PC-3 (cell line): ENCODE measurements at regions of chr12 and their contacts with region 1.

Region 1: DNA sequence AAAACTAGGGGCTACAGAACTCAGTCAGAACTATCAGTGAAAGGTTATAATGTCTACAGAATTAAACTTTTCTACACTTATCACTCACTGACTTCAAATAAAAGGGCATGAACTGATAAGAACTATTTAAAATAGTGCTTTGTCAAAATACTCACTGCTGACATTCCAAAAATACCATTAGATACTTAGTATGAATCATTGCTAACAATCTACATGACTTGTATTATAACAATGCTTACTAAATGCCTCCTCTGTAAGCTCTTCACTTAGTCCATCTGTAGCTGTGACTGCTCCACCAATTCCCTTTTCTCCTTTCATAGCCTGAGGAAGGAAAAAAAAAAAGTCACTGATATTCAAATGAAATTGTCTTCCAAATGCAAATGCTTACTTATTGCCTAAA is 17.0 kb downstream of the NFYB start:
- DNase-seq: peak; percentile 69
- ATAC-seq: peak; percentile 95
- H3K4me3 ChIP-seq: no peak overlapping the region
- H3K27ac ChIP-seq: no peak overlapping the region
- H3K4me1 ChIP-seq: peaks cover 12% of the 10 kb centered on the region
- H3K27me3 ChIP-seq: no peaks in the 10 kb centered on the region
- CTCF ChIP-seq: no peak

Region 2: GRCh38 chr12:104064031-104064822 is 56.8 kb before region 1 on chr12 and contains the start of gene HCFC2:
- CTCF ChIA-PET with region 1: no interaction called
- POLR2A ChIA-PET with region 1: interaction called, 15 read pairs
- intact Hi-C with region 1: no loop called
- DNase-seq: peak; percentile 90
- ATAC-seq: peak; percentile 86
- H3K4me3 ChIP-seq: peak within 1 kb of the TSS; percentile 94
- H3K27ac ChIP-seq: peak within 1 kb of the TSS; percentile 15
- H3K4me1 ChIP-seq: peaks cover 11% of the 10 kb centered on the region
- H3K27me3 ChIP-seq: no peaks in the 10 kb centered on the region
- CTCF ChIP-seq: no peak
- total RNA-seq, gene HCFC2: 7.8 and 10.7 TPM in 2 replicates

Region 3: DNA sequence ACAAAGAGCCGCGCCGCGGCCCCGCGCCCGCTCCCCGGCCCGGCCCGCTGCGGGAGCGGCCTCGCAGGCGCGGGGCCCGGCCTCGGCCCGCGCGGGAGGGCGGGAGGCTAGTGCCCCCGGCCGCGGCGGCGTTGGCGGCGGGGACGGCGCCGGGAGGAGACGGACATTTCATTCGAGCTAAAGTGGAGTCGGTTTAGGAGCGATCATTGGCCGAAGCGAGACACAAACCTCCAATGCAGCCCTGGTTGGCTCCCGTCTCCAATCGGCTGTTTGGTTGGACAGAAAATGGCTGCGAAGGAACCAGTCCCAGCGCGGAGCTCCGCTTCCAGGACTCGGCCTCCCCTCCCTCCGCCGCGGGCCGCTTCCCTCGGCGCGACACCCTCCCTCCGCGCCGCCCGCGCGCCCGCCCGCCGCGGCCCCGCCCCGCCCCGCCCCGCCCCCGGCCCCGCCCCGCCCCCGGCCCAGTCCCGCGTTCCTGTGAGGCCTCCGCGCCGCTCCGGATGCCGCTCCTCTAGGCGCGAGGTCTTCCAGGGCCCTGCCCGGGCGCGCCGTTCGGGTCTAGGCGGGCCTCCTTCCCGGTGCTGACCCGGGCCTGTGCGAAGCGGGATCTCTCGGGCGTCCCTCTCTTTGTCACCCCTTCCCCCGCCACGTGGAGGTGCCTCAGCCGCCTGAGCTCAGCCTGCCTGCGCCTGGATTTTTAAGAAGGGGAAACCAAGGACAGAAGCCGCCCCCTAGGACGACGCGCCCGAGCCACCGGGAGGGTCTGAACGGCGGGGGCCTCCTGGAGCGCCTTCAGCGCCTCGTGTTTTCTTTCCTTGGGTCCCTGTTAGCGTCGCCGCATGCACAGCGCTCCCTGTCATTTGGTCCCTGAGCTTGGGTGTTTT is 17.2 kb after region 1 on chr12 and contains the start of gene NFYB:
- CTCF ChIA-PET with region 1: no interaction called
- POLR2A ChIA-PET with region 1: interaction called, 11 read pairs
- intact Hi-C with region 1: no loop called
- DNase-seq: peak; percentile 99
- ATAC-seq: peak; percentile 95
- H3K4me3 ChIP-seq: peak within 1 kb of the TSS; percentile 98
- H3K27ac ChIP-seq: no peak within 1 kb of the TSS
- H3K4me1 ChIP-seq: peaks cover 25% of the 10 kb centered on the region
- H3K27me3 ChIP-seq: no peaks in the 10 kb centered on the region
- CTCF ChIP-seq: no peak
- total RNA-seq, gene NFYB: 20.6 and 21.7 TPM in 2 replicates